RWPE1 (cell line): ENCODE measurements at regions of chr15 and their contacts with region 1.

Region 1: DNA sequence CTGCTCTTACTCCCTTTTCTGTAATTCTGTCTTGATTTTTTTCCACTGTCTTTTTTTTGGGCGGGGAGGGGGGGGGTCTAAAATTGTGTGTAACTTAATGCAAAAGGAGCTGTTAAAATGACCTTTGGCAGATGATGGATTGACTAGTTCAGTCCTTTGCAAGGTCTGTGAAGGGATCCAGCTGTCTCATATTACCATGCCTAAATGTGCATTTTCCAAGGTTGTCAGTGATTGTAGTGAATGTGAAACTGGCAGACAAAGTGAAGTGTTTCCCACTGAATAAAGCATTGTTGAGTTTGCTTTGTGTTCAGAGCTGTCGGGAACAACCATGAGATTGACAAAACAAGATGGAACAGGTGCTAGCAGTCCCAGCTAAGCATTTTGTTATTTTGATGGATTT is 110.1 kb upstream of the SKOR1 start:
- DNase-seq: no peak
- H3K27ac ChIP-seq: no peak overlapping the region
- CTCF ChIP-seq: no peak

Region 2: GRCh38 chr15:67570875-67571647 is 144.1 kb before region 1 on chr15:
- CTCF ChIA-PET with region 1: no interaction called
- POLR2A ChIA-PET with region 1: interaction called, 10 read pairs
- DNase-seq: no peak
- H3K27ac ChIP-seq: no peak overlapping the region
- CTCF ChIP-seq: no peak

Region 3: DNA sequence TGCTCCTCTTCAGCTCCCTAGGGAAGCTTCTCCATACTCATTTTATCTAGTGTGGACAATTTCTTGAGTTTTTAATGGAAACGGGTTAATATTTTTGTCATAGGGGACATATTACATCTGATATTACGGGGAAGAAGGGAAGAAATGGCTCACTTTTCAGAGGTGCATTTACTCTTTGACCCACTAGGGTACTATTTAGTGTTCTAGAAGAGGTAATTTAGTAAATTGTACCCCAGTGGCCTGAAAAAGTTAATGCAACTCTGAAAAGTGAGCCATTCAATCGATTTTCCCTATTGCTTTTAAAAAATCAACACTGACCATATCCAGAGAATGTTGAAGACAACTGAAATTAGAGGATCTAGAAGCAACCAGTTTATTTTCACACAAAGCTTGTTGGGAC is 101.5 kb before region 1 on chr15:
- CTCF ChIA-PET with region 1: no interaction called
- POLR2A ChIA-PET with region 1: no interaction called
- DNase-seq: peak; percentile 3
- H3K27ac ChIP-seq: no peak overlapping the region
- CTCF ChIP-seq: no peak

Region 4: DNA sequence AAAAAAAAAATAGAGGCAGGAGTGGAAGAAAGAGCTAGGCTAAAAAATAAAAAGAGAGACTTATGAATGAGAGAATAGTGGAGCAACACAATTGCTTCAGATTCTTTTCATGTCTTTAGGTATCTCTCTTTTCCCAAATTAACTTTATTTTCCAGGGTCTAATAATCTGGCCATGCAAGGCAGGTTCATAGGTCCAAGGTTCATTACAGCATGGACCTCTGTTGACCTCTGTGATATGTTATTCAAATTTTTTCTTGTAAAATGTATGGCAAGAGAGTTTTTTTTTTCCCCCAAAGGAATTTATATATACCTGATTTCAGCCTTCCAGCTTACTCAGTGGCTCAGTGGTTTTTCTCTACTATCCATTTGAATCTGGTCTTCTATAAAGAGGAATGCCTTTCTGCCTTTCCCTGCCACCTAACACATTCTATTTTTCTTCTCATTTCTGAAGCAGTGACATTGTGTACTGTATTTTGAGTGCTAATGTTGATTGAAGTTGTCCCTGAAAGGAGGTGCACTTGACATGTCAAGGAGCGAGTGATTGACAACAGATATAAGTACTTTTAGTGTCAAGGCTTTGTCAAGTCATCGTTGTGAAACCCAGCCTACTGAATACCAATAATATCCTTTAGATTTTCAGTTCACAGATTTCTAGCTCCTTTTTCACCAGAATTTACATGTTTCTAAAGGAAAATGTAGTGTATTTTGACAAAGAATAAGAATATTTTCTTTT is 54.1 kb before region 1 on chr15:
- CTCF ChIA-PET with region 1: no interaction called
- POLR2A ChIA-PET with region 1: no interaction called
- DNase-seq: no peak
- H3K27ac ChIP-seq: no peak overlapping the region
- CTCF ChIP-seq: no peak

Region 5: DNA sequence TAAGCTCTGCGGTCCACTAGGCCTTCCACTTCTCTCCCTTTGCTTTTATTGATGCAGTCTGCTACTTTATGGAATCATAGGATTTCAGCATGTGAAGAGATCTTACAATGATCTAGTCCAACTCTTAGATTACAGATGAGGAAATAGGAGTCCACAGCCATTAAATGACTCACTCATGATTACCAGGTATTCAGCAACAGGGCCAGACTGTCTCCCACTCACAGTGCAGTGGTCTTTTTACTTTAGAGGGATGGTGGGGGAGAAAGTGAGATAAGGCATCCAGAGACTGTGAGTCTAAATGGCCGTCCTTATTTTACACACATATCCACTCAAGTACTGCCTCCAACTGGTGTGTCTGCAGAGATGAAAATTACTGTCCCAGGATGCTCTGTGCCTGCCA is 21.6 kb after region 1 on chr15:
- CTCF ChIA-PET with region 1: no interaction called
- POLR2A ChIA-PET with region 1: no interaction called
- DNase-seq: no peak
- H3K27ac ChIP-seq: no peak overlapping the region
- CTCF ChIP-seq: no peak